ENCODE measurements at regions of chr16 and their contacts with region 1.

Region 1: DNA sequence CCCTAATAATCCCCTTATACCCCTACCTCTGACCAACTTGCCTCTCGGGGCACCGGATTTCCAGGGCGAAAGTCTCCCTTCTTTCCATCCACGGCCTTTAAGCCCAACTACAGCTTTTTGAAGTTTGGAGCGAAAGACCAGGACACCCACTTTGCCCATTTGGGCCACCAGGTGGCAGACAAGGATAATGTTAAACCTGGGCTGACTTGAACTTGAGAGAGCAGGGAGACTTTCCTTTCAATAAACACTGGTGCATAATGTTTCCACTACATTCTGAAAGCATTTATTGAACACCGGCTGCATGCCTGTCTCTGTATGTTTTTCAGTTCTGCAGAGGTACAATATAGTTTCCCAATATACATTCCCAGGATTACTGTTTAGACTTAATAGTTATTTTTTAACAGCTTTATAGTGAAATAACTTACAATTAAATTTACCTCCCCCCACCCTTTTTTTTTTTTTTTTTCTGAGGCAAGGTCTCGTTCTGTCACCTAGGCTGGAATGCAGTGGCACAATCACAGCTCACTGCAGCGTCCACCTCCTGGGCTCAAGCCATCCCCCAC is 6.9 kb upstream of the CES3 start:
- DNase-seq: peak; percentile 88
- H3K4me3 Mint-ChIP-seq: peak overlapping the region; percentile 51
- H3K27ac Mint-ChIP-seq: peak overlapping the region; percentile 70
- H3K4me1 Mint-ChIP-seq: peaks cover 17% of the 10 kb centered on the region
- H3K27me3 Mint-ChIP-seq: no peaks in the 10 kb centered on the region
- CTCF ChIP-seq: peak; percentile 67

Region 2: GRCh38 chr16:66988197-66988788 is 34.1 kb after region 1 on chr16 and contains the start of gene CES4A:
- CTCF ChIA-PET with region 1: interaction called, 11 read pairs
- POLR2A ChIA-PET with region 1: no interaction called
- intact Hi-C with region 1: no loop called
- DNase-seq: peak; percentile 87
- H3K4me3 Mint-ChIP-seq: no peak within 1 kb of the TSS
- H3K27ac Mint-ChIP-seq: peak within 1 kb of the TSS; percentile 76
- H3K4me1 Mint-ChIP-seq: peaks cover 16% of the 10 kb centered on the region
- H3K27me3 Mint-ChIP-seq: no peaks in the 10 kb centered on the region
- CTCF ChIP-seq: no peak
- total RNA-seq, gene CES4A: 5.1 and 6.6 TPM in 2 replicates

Region 3: GRCh38 chr16:67100569-67101310 is 146.6 kb after region 1 on chr16:
- CTCF ChIA-PET with region 1: interaction called, 19 read pairs
- POLR2A ChIA-PET with region 1: no interaction called
- intact Hi-C with region 1: no loop called
- DNase-seq: no peak
- H3K4me3 Mint-ChIP-seq: no peak overlapping the region
- H3K27ac Mint-ChIP-seq: no peak overlapping the region
- H3K4me1 Mint-ChIP-seq: peaks cover 4% of the 10 kb centered on the region
- H3K27me3 Mint-ChIP-seq: no peaks in the 10 kb centered on the region
- CTCF ChIP-seq: peak; percentile 24

Measured in MCF 10A (cell line).